Transverse colon (tissue), 4 donors: ENCODE measurements at regions of chrX and their contacts with region 1.

Region 1: GRCh38 chrX:129637217-129638109 is 17.3 kb downstream of the APLN start:
- DNase-seq: peak; percentile 71
- H3K4me3 ChIP-seq: no peak overlapping the region
- H3K27ac ChIP-seq: peak overlapping the region; percentile 9 to 54 (median 32)
- H3K4me1 ChIP-seq: peaks cover 0 to 8% (median 3%) of the 10 kb centered on the region in 4 donors
- H3K27me3 ChIP-seq: no peaks in the 10 kb centered on the region
- CTCF ChIP-seq: peak; percentile 79 to 94 (median 84)
- EP300 ChIP-seq: no peak
- POLR2A ChIP-seq: no peak

Region 2: GRCh38 chrX:129717892-129718291 is 80.4 kb after region 1 on chrX:
- in situ Hi-C with region 1: loop called in 2 of 4 experiments (anchors 10 kb)
- intact Hi-C with region 1: no loop called
- DNase-seq: no peak
- H3K4me3 ChIP-seq: no peak overlapping the region
- H3K27ac ChIP-seq: no peak overlapping the region
- H3K4me1 ChIP-seq: no peaks in the 10 kb centered on the region
- H3K27me3 ChIP-seq: no peaks in the 10 kb centered on the region
- CTCF ChIP-seq: no peak
- EP300 ChIP-seq: no peak
- POLR2A ChIP-seq: no peak

Region 3: DNA sequence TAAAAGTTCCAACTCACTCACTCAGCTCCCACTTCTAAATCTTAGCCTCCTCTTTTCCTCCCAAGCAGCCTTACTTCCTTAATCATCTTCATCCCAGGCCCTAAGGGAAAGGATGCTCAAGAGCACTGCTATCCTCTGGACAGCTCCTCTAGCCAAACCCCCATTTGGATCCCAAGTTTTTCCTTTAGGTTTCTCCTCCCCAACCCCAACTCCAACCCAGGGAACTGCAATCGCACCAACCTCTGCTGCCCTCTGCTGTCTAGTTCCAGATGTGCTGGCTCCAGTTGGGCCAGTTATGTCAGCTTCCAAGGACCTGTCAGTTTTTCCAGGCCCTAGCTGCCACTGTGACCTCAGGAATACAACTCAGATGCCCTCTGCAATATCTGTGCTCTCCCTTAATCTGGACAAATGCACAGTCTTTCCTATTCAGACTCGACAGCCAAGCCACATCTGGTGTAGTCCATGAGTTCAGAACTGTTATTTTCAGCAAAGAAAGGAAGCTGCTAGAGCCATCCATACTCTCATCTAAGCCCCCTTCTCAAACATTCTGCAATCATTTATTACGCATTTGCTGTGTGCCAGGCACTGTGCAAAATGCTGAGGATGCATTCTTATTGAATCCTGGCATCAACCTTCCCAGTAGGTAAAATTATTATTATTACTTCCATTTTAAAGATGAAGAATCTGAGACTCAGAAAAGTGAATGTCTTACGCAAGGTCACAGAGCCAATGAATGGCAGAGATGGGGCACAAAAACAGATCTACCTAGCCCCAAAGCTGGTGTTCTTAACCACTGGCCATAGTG is 89.0 kb after region 1 on chrX:
- in situ Hi-C with region 1: loop called in 1 of 4 experiments (anchors 10 kb)
- intact Hi-C with region 1: loop called (anchors 1 kb)
- DNase-seq: peak; percentile 62
- H3K4me3 ChIP-seq: no peak overlapping the region
- H3K27ac ChIP-seq: no peak overlapping the region
- H3K4me1 ChIP-seq: no peaks in the 10 kb centered on the region
- H3K27me3 ChIP-seq: no peaks in the 10 kb centered on the region
- CTCF ChIP-seq: peak; percentile 56 to 74 (median 59)
- EP300 ChIP-seq: no peak
- POLR2A ChIP-seq: no peak

Region 4: GRCh38 chrX:129737916-129738315 is 100.5 kb after region 1 on chrX:
- in situ Hi-C with region 1: no loop called
- intact Hi-C with region 1: no loop called
- DNase-seq: no peak
- H3K4me3 ChIP-seq: no peak overlapping the region
- H3K27ac ChIP-seq: peak overlapping the region; percentile 3 to 59 (median 50)
- H3K4me1 ChIP-seq: peaks cover 0 to 24% (median 11%) of the 10 kb centered on the region in 4 donors
- H3K27me3 ChIP-seq: no peaks in the 10 kb centered on the region
- CTCF ChIP-seq: no peak
- EP300 ChIP-seq: no peak
- POLR2A ChIP-seq: no peak

Region 5: GRCh38 chrX:129843459-129844306 is 206.2 kb after region 1 on chrX and contains the start of gene ZDHHC9:
- in situ Hi-C with region 1: loop called in 1 of 4 experiments (anchors 25 kb)
- intact Hi-C with region 1: no loop called
- DNase-seq: peak; percentile 90
- H3K4me3 ChIP-seq: peak within 1 kb of the TSS; percentile 60 to 89 (median 70)
- H3K27ac ChIP-seq: peak within 1 kb of the TSS; percentile 85 to 92 (median 87)
- H3K4me1 ChIP-seq: peaks cover 0 to 21% (median 0%) of the 10 kb centered on the region in 4 donors
- H3K27me3 ChIP-seq: no peaks in the 10 kb centered on the region
- CTCF ChIP-seq: peak in 2 of 5 experiments; percentile 9 to 19
- EP300 ChIP-seq: no peak
- POLR2A ChIP-seq: peak; percentile 47
- total RNA-seq, gene ZDHHC9: 9.2 to 60.2 (median 30.7) TPM